ENCODE measurements at regions of chr2 and their contacts with region 1.

Region 1: DNA sequence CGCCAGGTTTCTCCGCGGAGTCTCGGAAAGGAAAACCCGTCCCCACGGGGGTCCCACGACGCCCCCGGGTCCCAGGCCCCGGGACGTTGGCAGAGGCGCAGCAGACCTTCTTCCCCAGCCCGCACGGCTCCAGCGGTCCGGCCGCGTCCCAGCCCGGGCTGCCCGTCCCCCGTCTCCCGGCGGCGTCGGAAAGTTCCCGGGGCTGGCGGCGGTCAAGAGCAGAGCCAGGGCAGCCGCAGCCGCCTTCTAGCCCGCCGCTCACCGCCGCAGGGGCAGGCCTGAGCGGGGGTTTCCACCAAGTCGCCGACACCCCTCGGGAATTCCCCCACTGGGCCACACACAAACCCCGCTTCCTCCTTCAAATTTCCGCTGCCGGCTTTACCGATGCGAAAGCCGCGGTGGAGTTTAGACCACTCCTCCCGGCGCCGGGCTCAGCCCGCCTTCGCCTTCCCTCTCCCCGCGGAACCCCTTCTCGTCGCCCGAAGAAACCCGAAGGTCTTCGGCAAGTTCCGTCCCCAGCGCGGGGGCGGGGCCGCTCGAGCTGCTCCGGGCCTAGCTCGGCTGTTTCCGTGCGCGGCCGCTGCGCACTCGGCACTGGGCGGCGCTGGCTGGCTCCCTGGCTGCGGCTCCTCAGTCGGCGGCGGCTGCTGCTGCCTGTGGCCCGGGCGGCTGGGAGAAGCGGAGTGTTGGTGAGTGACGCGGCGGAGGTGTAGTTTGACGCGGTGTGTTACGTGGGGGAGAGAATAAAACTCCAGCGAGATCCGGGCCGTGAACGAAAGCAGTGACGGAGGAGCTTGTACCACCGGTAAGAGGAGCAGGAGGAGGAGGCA is at the start of gene CREB1:
- DNase-seq: peak; percentile 100
- ATAC-seq: peak; percentile 80
- H3K4me3 Mint-ChIP-seq: peak within 1 kb of the TSS; percentile 95
- H3K27ac Mint-ChIP-seq: peak within 1 kb of the TSS; percentile 100
- H3K4me1 Mint-ChIP-seq: peaks cover 74% of the 10 kb centered on the region
- H3K27me3 Mint-ChIP-seq: no peaks in the 10 kb centered on the region
- CTCF ChIP-seq: no peak
- total RNA-seq, gene CREB1: 112 and 127 TPM in 2 replicates

Region 2: DNA sequence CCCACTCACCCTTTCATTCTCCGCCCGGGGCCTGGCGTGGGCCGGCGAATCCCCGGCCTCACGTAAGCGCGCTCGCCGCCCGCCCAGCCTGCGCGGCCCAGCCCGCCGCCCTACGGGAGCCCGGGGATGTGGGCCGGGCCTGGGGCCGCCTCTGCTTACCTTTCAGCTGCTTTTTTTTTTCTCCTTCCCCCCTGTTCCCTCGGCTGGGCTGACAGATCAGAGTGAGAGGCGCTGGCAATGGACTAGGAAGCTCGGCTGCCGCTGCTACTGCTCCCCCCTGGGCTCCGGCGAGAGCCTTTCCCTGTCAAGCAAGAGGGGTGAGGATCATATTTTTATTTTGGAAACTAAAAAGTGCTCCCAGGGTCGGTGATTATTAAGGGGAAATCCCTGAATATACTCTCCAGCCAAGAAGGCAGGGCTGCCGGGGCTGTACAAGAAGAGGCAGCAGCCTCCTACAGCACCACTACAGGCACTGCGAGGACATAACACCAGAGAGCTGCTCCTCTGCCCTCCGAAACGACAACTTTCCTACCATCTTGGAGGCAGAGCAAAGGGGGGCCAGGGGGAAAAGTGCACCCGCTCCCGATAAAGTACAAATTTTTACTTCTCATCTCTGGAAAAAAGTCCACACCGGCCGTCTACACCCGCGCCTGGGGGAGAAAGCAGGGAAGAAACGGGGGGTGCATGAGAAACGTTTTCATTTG is 1443.7 kb before region 1 on chr2 and contains the start of gene INO80D:
- CTCF ChIA-PET with region 1: no interaction called
- POLR2A ChIA-PET with region 1: interaction called, 3 read pairs
- intact Hi-C with region 1: loop called (anchors 2 kb)
- DNase-seq: peak; percentile 76
- ATAC-seq: peak; percentile 89
- H3K4me3 Mint-ChIP-seq: peak within 1 kb of the TSS; percentile 99
- H3K27ac Mint-ChIP-seq: peak within 1 kb of the TSS; percentile 100
- H3K4me1 Mint-ChIP-seq: peaks cover 42% of the 10 kb centered on the region
- H3K27me3 Mint-ChIP-seq: no peaks in the 10 kb centered on the region
- CTCF ChIP-seq: no peak
- total RNA-seq, gene INO80D: 52.1 and 53.1 TPM in 2 replicates

Region 3: DNA sequence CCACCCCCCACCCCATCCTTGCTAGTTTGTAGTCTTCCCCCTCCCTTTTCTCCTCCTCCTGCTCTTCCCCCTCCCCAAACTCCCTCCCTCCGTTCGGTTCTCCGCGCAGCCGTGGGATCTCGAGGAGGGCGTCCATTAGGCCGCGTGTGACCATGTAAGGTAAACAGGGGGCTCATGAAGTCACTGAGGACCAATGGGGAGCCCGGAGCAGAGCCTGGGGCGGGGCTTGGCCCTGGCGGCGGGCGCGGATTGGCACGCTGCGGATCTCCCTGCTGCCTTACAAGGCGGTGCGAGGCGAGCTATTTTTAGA is 363.6 kb before region 1 on chr2:
- CTCF ChIA-PET with region 1: no interaction called
- POLR2A ChIA-PET with region 1: interaction called, 54 read pairs
- intact Hi-C with region 1: loop called (anchors 1 kb)
- DNase-seq: peak; percentile 88
- ATAC-seq: peak; percentile 89
- H3K4me3 Mint-ChIP-seq: peak overlapping the region; percentile 95
- H3K27ac Mint-ChIP-seq: peak overlapping the region; percentile 95
- H3K4me1 Mint-ChIP-seq: peaks cover 63% of the 10 kb centered on the region
- H3K27me3 Mint-ChIP-seq: no peaks in the 10 kb centered on the region
- CTCF ChIP-seq: no peak

Region 4: GRCh38 chr2:207540431-207540830 is 10.9 kb after region 1 on chr2:
- CTCF ChIA-PET with region 1: no interaction called
- POLR2A ChIA-PET with region 1: interaction called, 16 read pairs
- intact Hi-C with region 1: loop called (anchors 1 kb)
- DNase-seq: no peak
- ATAC-seq: no peak
- H3K4me3 Mint-ChIP-seq: no peak overlapping the region
- H3K27ac Mint-ChIP-seq: no peak overlapping the region
- H3K4me1 Mint-ChIP-seq: peaks cover 56% of the 10 kb centered on the region
- H3K27me3 Mint-ChIP-seq: no peaks in the 10 kb centered on the region
- CTCF ChIP-seq: no peak

Region 5: DNA sequence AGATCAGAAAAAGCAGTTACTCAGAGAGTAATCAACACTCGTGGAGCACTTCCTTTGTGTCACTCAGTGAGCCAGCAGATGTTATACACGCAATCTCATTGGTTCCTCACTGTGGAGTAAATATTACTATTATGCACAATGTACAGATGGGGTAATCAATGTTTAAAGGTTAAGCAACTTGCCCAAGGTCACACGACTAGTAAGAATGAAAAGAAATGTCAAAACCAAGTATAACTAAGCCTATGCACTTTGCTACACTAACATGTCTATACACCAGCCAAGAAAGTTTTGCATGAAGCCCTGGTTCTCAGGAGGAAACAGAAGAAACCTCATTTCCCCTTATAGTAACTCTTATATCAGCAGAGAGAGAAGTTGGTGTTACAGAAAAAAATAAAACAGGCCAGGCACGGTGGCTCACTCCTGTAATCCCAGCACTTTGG is 90.2 kb after region 1 on chr2:
- CTCF ChIA-PET with region 1: interaction called, 12 read pairs
- POLR2A ChIA-PET with region 1: interaction called, 104 read pairs
- intact Hi-C with region 1: loop called (anchors 1 kb)
- DNase-seq: no peak
- ATAC-seq: peak; percentile 63
- H3K4me3 Mint-ChIP-seq: peak overlapping the region; percentile 17
- H3K27ac Mint-ChIP-seq: peak overlapping the region; percentile 82
- H3K4me1 Mint-ChIP-seq: peaks cover 68% of the 10 kb centered on the region
- H3K27me3 Mint-ChIP-seq: no peaks in the 10 kb centered on the region
- CTCF ChIP-seq: no peak

Region 6: GRCh38 chr2:207698301-207698700 is 168.8 kb after region 1 on chr2:
- CTCF ChIA-PET with region 1: no interaction called
- POLR2A ChIA-PET with region 1: no interaction called
- intact Hi-C with region 1: no loop called
- DNase-seq: no peak
- ATAC-seq: no peak
- H3K4me3 Mint-ChIP-seq: no peak overlapping the region
- H3K27ac Mint-ChIP-seq: no peak overlapping the region
- H3K4me1 Mint-ChIP-seq: no peaks in the 10 kb centered on the region
- H3K27me3 Mint-ChIP-seq: no peaks in the 10 kb centered on the region
- CTCF ChIP-seq: no peak

Region 7: GRCh38 chr2:208265801-208266552 is 736.4 kb after region 1 on chr2 and contains the start of gene PIKFYVE:
- CTCF ChIA-PET with region 1: no interaction called
- POLR2A ChIA-PET with region 1: interaction called, 8 read pairs
- intact Hi-C with region 1: loop called (anchors 1 kb)
- DNase-seq: peak; percentile 85
- ATAC-seq: peak; percentile 87
- H3K4me3 Mint-ChIP-seq: peak within 1 kb of the TSS; percentile 95
- H3K27ac Mint-ChIP-seq: peak within 1 kb of the TSS; percentile 95
- H3K4me1 Mint-ChIP-seq: peaks cover 56% of the 10 kb centered on the region
- H3K27me3 Mint-ChIP-seq: no peaks in the 10 kb centered on the region
- CTCF ChIP-seq: no peak
- total RNA-seq, gene PIKFYVE: 92.2 and 106 TPM in 2 replicates